Activated CD4-positive, alpha-beta memory T cell treated with anti-CD3 and anti-CD28 coated beads, Interleukin-2, amount 10 ng/mL, durations not matched to agents 7 days and 5 days (primary cell): ENCODE measurements at regions of chr20 and their contacts with region 1.

Region 1: GRCh38 chr20:24100385-24101011 is 111.9 kb upstream of the GGTLC1 start:
- DNase-seq: peak; percentile 69
- H3K4me3 Mint-ChIP-seq: no peak overlapping the region
- H3K27ac Mint-ChIP-seq: no peak overlapping the region
- H3K4me1 Mint-ChIP-seq: peaks cover 14% of the 10 kb centered on the region
- H3K27me3 Mint-ChIP-seq: peaks cover 5% of the 10 kb centered on the region

Region 2: DNA sequence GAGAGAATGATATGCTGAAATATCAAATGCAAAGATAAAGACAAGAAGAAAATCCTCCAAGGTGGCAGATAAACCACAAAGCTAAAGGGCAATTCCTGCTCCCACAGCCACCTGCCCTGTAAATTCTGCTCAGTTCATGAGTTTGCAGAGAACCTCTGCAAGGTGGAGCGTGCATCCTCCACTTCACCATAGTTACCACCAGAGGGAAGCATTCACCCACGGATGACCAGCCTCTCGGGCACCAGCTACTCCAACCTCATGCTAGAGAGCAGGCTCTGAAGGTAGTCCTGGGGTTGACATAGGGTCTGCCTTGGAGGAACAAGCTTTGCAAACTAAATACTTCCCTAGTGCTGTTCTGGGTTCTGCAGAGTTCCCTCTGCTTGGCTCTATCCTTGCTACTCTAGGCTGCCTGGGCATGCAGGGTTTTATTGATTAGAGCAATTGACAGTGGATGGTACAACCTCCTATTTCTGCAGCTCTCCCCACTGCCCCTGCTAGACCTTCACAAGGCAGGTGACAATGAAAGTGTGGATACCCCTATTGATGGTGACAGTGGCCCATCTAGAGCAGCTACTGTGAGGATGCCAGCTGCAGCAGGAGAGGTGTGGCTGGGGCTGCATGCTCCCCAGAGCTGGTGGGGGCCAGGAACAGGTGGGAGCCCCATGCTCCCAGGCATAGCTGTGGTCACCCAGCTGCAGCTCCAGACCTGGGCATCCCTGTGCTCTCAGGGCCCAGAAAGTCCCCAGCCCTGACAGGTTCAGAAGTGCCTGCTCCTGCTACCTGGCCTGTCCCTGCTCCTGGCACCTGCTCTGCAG is 163.0 kb before region 1 on chr20:
- CTCF ChIA-PET with region 1: interaction called, 18 read pairs
- POLR2A ChIA-PET with region 1: no interaction called
- DNase-seq: peak; percentile 63
- H3K4me3 Mint-ChIP-seq: no peak overlapping the region
- H3K27ac Mint-ChIP-seq: no peak overlapping the region
- H3K4me1 Mint-ChIP-seq: no peaks in the 10 kb centered on the region
- H3K27me3 Mint-ChIP-seq: peaks cover 6% of the 10 kb centered on the region

Region 3: DNA sequence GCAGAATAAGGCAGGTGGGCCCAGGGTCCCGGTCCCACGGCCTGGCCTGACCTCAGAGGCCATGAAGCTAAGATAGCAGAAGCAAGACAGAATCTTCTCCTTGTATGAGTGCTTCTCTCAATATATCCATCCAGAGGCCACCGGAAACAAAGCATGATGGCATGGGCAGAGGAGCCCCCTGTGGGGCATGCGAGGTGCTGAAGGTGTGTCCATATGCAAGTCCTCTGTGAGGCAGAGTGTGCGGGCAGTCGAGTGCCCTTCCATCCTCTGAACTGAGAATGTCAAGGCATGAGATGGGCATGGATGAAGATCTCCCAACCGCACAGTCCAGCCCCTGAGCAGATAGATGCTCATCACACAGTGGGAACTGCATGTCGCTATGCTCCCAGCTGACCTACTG is 102.1 kb before region 1 on chr20:
- CTCF ChIA-PET with region 1: interaction called, 17 read pairs
- POLR2A ChIA-PET with region 1: no interaction called
- DNase-seq: no peak
- H3K4me3 Mint-ChIP-seq: no peak overlapping the region
- H3K27ac Mint-ChIP-seq: no peak overlapping the region
- H3K4me1 Mint-ChIP-seq: no peaks in the 10 kb centered on the region
- H3K27me3 Mint-ChIP-seq: peaks cover 20% of the 10 kb centered on the region

Region 4: DNA sequence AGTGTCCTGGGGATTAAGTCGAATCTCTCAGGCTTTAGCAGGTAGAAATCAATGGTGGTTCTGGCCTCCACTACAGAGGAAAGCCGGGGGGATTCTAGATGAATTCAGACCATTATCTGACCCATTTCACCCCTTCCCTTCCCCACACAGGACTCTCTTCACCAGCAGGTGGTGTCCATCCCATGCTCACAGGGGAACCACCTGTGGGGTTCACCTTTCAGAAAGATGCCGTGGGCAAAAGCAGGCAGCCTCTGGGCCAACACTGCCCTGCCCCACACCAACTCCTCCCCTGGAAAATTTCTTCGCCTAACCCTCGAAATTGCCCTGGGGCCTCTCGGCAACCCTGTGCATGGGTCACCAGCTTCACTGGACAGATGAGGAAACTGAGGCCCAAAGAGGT is 11.9 kb after region 1 on chr20:
- CTCF ChIA-PET with region 1: no interaction called
- POLR2A ChIA-PET with region 1: no interaction called
- DNase-seq: no peak
- H3K4me3 Mint-ChIP-seq: no peak overlapping the region
- H3K27ac Mint-ChIP-seq: no peak overlapping the region
- H3K4me1 Mint-ChIP-seq: peaks cover 19% of the 10 kb centered on the region
- H3K27me3 Mint-ChIP-seq: peaks cover 2% of the 10 kb centered on the region